Spleen (tissue), 13 donors: ENCODE measurements at regions of chr4 and their contacts with region 1.

Region 1: GRCh38 chr4:99563310-99564186 is at the start of gene TRMT10A:
- DNase-seq: peak; percentile 99
- H3K4me3 ChIP-seq: peak within 1 kb of the TSS; percentile 51 to 79 (median 60)
- H3K27ac ChIP-seq: peak within 1 kb of the TSS; percentile 93 to 98 (median 96)
- H3K4me1 ChIP-seq: peaks cover 4 to 27% (median 16%) of the 10 kb centered on the region in 6 donors
- H3K27me3 ChIP-seq: no peaks in the 10 kb centered on the region
- CTCF ChIP-seq: peak in 5 of 11 experiments; percentile 20 to 40 (median 30)
- POLR2A ChIP-seq: peak in 1 of 3 donors; percentile 58
- total RNA-seq, gene TRMT10A: 4.3 to 7.8 (median 5.2) TPM

Region 2: DNA sequence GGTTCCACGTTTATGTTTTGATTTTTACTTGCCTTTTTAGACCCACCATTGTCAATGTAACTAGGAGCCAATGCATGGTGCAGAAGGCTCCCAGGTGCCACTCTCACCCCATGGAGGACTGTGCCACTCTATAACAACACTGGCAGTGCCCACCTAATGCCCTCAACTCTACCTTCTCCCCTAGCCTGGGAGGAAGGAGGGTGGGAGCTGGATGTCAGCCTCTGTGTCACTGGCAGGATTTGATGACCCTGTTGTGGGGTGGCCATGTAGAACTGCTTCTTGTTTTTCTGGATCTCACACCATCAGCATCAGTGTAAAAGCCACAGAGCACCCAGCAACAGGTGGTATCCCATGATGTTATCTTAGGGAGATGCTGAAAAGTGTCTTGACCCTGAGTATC is 228.7 kb before region 1 on chr4:
- intact Hi-C with region 1: no loop called
- DNase-seq: no peak
- H3K4me3 ChIP-seq: no peak overlapping the region
- H3K27ac ChIP-seq: no peak overlapping the region
- H3K4me1 ChIP-seq: no peaks in the 10 kb centered on the region
- H3K27me3 ChIP-seq: no peaks in the 10 kb centered on the region
- CTCF ChIP-seq: no peak
- POLR2A ChIP-seq: no peak

Region 3: GRCh38 chr4:99735822-99736221 is 172.3 kb after region 1 on chr4:
- intact Hi-C with region 1: no loop called
- DNase-seq: no peak
- H3K4me3 ChIP-seq: no peak overlapping the region
- H3K27ac ChIP-seq: no peak overlapping the region
- H3K4me1 ChIP-seq: no peaks in the 10 kb centered on the region
- H3K27me3 ChIP-seq: no peaks in the 10 kb centered on the region
- CTCF ChIP-seq: no peak
- POLR2A ChIP-seq: no peak

Region 4: GRCh38 chr4:99808260-99808857 is 244.8 kb after region 1 on chr4:
- intact Hi-C with region 1: loop called (anchors 5 kb)
- DNase-seq: peak; percentile 89
- H3K4me3 ChIP-seq: no peak overlapping the region
- H3K27ac ChIP-seq: no peak overlapping the region
- H3K4me1 ChIP-seq: peaks cover 0 to 18% (median 6%) of the 10 kb centered on the region in 6 donors
- H3K27me3 ChIP-seq: no peaks in the 10 kb centered on the region
- CTCF ChIP-seq: peak; percentile 48 to 84 (median 73)
- POLR2A ChIP-seq: no peak

Region 5: GRCh38 chr4:99949034-99949998 is 385.8 kb after region 1 on chr4:
- intact Hi-C with region 1: loop called (anchors 5 kb)
- DNase-seq: peak; percentile 94
- H3K4me3 ChIP-seq: peak overlapping the region; percentile 76 to 96 (median 90)
- H3K27ac ChIP-seq: peak overlapping the region; percentile 77 to 99 (median 98)
- H3K4me1 ChIP-seq: peaks cover 31 to 62% (median 45%) of the 10 kb centered on the region in 6 donors
- H3K27me3 ChIP-seq: no peaks in the 10 kb centered on the region
- CTCF ChIP-seq: peak; percentile 84 to 96 (median 91)
- POLR2A ChIP-seq: no peak